ENCODE measurements at regions of chr14 and their contacts with region 1.

Region 1: DNA sequence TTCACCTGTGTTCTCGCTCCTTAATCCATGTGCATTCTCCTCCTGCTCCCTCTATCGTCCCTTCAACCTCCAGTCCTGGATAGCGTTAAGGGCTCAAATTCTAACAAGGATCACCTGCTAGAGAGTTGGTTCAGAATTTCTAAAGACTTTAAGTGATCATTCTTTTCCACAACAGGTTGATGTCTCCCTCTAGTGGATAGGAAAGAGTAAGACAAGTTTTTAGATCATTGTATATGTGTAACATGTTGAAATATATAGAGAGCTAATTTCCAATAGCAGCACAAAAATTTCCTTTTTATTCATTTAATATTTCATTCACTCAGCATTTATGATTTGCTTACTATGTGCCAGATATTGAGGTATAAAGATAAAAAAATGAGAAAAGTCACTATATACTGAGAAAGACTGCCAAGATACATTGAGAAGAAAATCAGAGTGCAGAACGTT is 9.3 kb upstream of the ESR2 start:
- DNase-seq: peak; percentile 79
- H3K4me3 Mint-ChIP-seq: no peak overlapping the region
- H3K27ac Mint-ChIP-seq: no peak overlapping the region
- H3K4me1 Mint-ChIP-seq: no peaks in the 10 kb centered on the region
- H3K27me3 Mint-ChIP-seq: no peaks in the 10 kb centered on the region
- CTCF ChIP-seq: peak; percentile 64

Region 2: DNA sequence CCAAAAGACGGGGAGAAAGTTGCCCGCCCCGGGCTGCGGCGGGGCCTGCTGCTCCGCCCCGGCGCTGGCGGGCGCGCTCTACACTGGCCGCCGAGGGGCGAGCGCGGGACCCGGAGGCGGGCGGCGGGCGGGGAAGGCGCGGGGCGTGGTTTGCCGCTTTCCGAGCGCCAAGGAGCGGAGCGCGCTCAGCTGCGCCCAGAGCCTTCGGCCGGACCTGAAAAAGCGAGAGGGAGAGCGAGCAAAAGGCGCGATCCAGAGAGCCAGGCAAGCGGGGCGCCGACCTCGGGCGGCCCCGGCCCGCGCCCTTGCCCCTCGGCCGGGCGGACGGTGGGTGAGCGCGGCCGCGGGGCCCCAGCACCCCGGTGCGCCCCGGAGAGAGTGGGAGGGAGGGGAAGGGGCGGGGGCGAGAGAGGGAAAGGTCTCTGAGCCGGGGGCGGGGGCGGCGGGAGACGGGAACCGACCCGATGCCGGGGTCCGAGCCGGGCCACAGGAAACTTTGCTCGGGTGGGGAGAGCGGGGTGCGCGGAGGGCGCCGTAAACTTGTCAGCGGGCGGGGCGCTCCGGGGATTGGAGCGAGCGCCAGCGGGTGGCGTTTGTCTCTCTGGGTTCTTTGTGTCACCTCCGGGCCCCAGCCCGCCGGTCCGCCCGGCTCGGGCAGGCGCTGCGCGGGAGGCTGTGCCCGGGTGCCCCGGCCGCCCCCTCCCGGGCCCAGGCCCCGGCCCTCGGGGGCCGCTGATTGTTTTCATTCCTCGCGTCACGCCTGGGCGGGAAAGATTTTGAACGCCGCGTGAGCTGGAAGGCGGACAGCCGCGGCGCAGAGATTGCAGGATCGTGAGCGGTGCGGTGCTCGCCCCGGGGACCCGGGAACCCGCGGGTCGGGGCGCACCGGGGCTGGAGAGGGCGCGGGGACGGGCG is 450.4 kb before region 1 on chr14 and contains the start of gene SYNE2:
- CTCF ChIA-PET with region 1: no interaction called
- POLR2A ChIA-PET with region 1: interaction called, 3 read pairs
- intact Hi-C with region 1: loop called (anchors 1 kb)
- DNase-seq: peak; percentile 77
- H3K4me3 Mint-ChIP-seq: peak within 1 kb of the TSS; percentile 89
- H3K27ac Mint-ChIP-seq: peak within 1 kb of the TSS; percentile 86
- H3K4me1 Mint-ChIP-seq: peaks cover 25% of the 10 kb centered on the region
- H3K27me3 Mint-ChIP-seq: no peaks in the 10 kb centered on the region
- CTCF ChIP-seq: no peak
- total RNA-seq, gene SYNE2: 51.2 and 67.4 TPM in 2 replicates

Region 3: GRCh38 chr14:64012003-64012402 is 291.5 kb before region 1 on chr14:
- CTCF ChIA-PET with region 1: interaction called, 32 read pairs
- POLR2A ChIA-PET with region 1: no interaction called
- intact Hi-C with region 1: loop called (anchors 1 kb)
- DNase-seq: no peak
- H3K4me3 Mint-ChIP-seq: no peak overlapping the region
- H3K27ac Mint-ChIP-seq: peak overlapping the region; percentile 24
- H3K4me1 Mint-ChIP-seq: no peaks in the 10 kb centered on the region
- H3K27me3 Mint-ChIP-seq: no peaks in the 10 kb centered on the region
- CTCF ChIP-seq: no peak

Region 4: GRCh38 chr14:64060648-64061096 is 242.8 kb before region 1 on chr14:
- CTCF ChIA-PET with region 1: interaction called, 3 read pairs
- POLR2A ChIA-PET with region 1: no interaction called
- intact Hi-C with region 1: loop called (anchors 1 kb)
- DNase-seq: peak; percentile 95
- H3K4me3 Mint-ChIP-seq: no peak overlapping the region
- H3K27ac Mint-ChIP-seq: peak overlapping the region; percentile 98
- H3K4me1 Mint-ChIP-seq: peaks cover 17% of the 10 kb centered on the region
- H3K27me3 Mint-ChIP-seq: no peaks in the 10 kb centered on the region
- CTCF ChIP-seq: peak; percentile 62

Region 5: GRCh38 chr14:64184103-64184729 is 119.3 kb before region 1 on chr14:
- CTCF ChIA-PET with region 1: no interaction called
- POLR2A ChIA-PET with region 1: no interaction called
- intact Hi-C with region 1: no loop called
- DNase-seq: no peak
- H3K4me3 Mint-ChIP-seq: no peak overlapping the region
- H3K27ac Mint-ChIP-seq: no peak overlapping the region
- H3K4me1 Mint-ChIP-seq: no peaks in the 10 kb centered on the region
- H3K27me3 Mint-ChIP-seq: no peaks in the 10 kb centered on the region
- CTCF ChIP-seq: no peak

Region 6: DNA sequence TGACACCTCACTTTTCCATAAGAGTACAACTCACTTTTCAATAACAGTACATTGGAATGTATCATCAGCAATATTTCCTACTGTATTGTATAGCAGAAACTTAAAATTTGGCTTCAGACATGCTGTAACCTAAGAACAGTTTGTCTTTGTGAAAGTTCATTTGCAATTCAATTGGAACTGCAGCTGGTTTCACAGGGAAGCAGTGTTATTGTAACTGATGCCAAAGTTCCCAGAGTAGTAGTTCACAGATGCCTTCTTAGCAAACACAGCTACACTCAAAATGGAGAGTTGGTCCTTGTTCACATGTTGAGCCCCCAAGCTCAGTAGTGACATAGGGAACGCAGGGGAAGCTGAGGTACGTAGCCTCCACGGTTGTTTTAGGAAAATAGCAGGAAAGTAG is 269.6 kb after region 1 on chr14:
- CTCF ChIA-PET with region 1: no interaction called
- POLR2A ChIA-PET with region 1: no interaction called
- intact Hi-C with region 1: no loop called
- DNase-seq: no peak
- H3K4me3 Mint-ChIP-seq: no peak overlapping the region
- H3K27ac Mint-ChIP-seq: no peak overlapping the region
- H3K4me1 Mint-ChIP-seq: peaks cover 6% of the 10 kb centered on the region
- H3K27me3 Mint-ChIP-seq: no peaks in the 10 kb centered on the region
- CTCF ChIP-seq: no peak

Region 7: DNA sequence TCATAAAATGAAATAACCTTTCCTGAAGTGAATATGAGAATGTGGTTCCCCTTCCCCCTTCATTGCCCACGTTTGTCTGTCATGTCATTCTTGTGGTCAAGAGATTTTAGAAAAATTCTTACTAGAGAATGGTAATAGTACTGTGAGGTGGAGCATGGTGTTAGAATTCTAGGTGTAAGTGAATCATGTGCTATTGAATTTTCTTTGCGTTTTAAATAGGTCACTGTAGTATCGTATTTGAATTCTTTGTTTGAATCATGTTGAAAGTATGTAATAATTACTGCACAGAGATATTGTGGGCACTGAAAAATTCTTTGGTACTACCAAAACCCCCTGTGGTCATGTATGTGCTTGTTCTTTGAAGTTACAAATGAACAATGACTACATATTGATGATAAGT is 1158.9 kb after region 1 on chr14:
- CTCF ChIA-PET with region 1: no interaction called
- POLR2A ChIA-PET with region 1: no interaction called
- intact Hi-C with region 1: no loop called
- DNase-seq: no peak
- H3K4me3 Mint-ChIP-seq: no peak overlapping the region
- H3K27ac Mint-ChIP-seq: peak overlapping the region; percentile 16
- H3K4me1 Mint-ChIP-seq: peaks cover 16% of the 10 kb centered on the region
- H3K27me3 Mint-ChIP-seq: no peaks in the 10 kb centered on the region
- CTCF ChIP-seq: no peak